ENCODE measurements at regions of chr7 and their contacts with region 1.

Region 1: DNA sequence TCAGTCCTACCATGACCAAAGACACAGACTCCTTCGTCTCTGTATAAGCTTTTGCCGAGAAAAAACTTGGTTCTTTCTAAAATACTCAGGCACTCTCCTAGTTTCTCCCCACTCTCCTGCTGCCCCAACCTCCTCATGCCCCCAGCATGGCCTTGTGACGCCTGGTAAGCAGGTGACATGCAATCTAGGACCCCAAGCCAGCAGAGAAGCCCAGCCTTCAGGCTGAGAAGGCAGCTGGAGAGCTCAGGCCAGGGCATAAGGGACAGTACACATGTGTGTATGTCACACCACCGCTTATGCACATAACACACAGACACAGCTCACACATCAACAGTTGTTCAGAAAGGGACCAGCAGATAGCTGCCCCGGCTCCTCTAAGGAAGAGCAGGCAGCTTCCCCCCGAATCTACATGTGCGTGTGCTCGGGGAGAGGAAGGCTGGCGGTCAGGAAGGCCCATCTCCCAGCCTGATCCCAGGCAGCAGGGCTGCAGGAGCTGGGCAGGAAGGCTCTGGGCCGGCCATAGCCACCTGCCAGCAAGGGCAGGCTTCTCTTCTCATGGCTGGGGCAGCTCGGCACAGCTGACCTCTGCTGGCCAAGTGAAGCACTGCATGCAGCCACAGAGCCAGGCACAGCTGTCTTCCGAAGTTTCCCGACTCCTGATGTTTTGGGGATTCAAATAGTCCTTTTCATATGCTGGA is 8.5 kb downstream of the DDX56 start:
- DNase-seq: peak; percentile 59 to 96 (median 71)

Region 2: GRCh38 chr7:44218418-44219201 is 346.6 kb before region 1 on chr7:
- intact Hi-C with region 1: loop called (anchors 10 kb)
- DNase-seq: peak in 6 of 10 donors; percentile 10 to 89 (median 48)

Measured in posterior cingulate gyrus (tissue), 11 donors.